Caco-2 (cell line): ENCODE measurements at regions of chr1 and their contacts with region 1.

Region 1: GRCh38 chr1:245156081-245156735 is 1.4 kb downstream of the KIF26B start:
- DNase-seq: peak; percentile 89 to 94
- H3K4me3 ChIP-seq: peak overlapping the region; percentile 63
- H3K4me3 Mint-ChIP-seq: peak overlapping the region; percentile 97
- H3K27ac Mint-ChIP-seq: no peak overlapping the region
- H3K4me1 ChIP-seq: peaks cover 8% of the 10 kb centered on the region
- H3K4me1 Mint-ChIP-seq: no peaks in the 10 kb centered on the region
- H3K27me3 ChIP-seq: no peaks in the 10 kb centered on the region; the same call in none of the 2 replicates
- H3K27me3 Mint-ChIP-seq: peaks cover 7% of the 10 kb centered on the region
- CTCF ChIP-seq: peak; percentile 82 to 84

Region 2: GRCh38 chr1:245108909-245109308 is 47.3 kb before region 1 on chr1:
- CTCF ChIA-PET with region 1: no interaction called
- POLR2A ChIA-PET with region 1: interaction called, 11 read pairs
- intact Hi-C with region 1: no loop called
- DNase-seq: no peak
- H3K4me3 ChIP-seq: no peak overlapping the region
- H3K4me3 Mint-ChIP-seq: no peak overlapping the region
- H3K27ac Mint-ChIP-seq: no peak overlapping the region
- H3K4me1 ChIP-seq: peaks cover 3% of the 10 kb centered on the region; the same call in 1 of the 2 replicates
- H3K4me1 Mint-ChIP-seq: peaks cover 20% of the 10 kb centered on the region
- H3K27me3 ChIP-seq: no peaks in the 10 kb centered on the region
- H3K27me3 Mint-ChIP-seq: no peaks in the 10 kb centered on the region
- CTCF ChIP-seq: no peak

Region 3: DNA sequence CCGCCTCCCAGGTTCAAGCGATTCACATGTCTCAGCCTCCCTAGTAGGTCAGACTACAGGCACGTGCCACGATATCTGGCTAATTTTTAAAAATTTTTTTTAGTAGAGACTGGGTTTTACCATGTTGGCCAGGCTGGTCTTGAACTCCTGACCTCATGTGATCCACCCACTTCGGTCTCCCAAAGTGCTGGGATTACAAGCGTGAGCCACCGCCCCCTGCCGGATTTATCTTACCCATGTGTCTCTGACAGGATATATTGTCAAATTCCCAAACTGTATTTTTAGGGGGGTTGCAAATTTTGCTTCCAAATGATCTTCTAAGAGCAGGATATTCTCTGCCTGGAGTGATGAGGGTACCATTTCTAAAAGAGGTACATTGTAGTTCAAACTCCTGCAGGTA is 72.8 kb after region 1 on chr1:
- CTCF ChIA-PET with region 1: no interaction called
- POLR2A ChIA-PET with region 1: no interaction called
- intact Hi-C with region 1: no loop called
- DNase-seq: no peak
- H3K4me3 ChIP-seq: no peak overlapping the region
- H3K4me3 Mint-ChIP-seq: no peak overlapping the region
- H3K27ac Mint-ChIP-seq: no peak overlapping the region
- H3K4me1 ChIP-seq: no peaks in the 10 kb centered on the region
- H3K4me1 Mint-ChIP-seq: no peaks in the 10 kb centered on the region
- H3K27me3 ChIP-seq: no peaks in the 10 kb centered on the region
- H3K27me3 Mint-ChIP-seq: no peaks in the 10 kb centered on the region
- CTCF ChIP-seq: no peak

Region 4: GRCh38 chr1:245241241-245242130 is 85.3 kb after region 1 on chr1:
- CTCF ChIA-PET with region 1: no interaction called
- POLR2A ChIA-PET with region 1: no interaction called
- intact Hi-C with region 1: no loop called
- DNase-seq: no peak
- H3K4me3 ChIP-seq: no peak overlapping the region
- H3K4me3 Mint-ChIP-seq: no peak overlapping the region
- H3K27ac Mint-ChIP-seq: no peak overlapping the region
- H3K4me1 ChIP-seq: peaks cover 11% of the 10 kb centered on the region
- H3K4me1 Mint-ChIP-seq: peaks cover 5% of the 10 kb centered on the region
- H3K27me3 ChIP-seq: no peaks in the 10 kb centered on the region
- H3K27me3 Mint-ChIP-seq: no peaks in the 10 kb centered on the region
- CTCF ChIP-seq: no peak

Region 5: DNA sequence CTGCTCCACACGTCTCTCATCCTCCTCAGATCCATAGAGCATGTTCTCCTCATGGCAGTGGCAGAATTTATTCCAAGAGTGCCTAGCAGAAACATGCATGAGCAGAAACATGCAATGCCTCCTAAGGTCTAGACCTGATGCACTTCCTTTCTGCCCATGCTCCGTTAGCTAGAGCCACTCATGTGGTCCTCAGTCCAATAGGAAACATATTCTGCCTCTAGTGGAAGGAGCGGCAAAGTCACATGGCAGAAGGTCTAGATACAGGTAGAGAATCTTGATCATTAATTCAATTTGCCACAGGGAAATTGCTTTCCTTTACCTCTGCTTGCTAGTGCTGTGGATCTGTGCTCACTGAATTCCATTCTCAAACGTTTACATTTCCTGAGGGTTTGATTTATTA is 129.0 kb after region 1 on chr1:
- CTCF ChIA-PET with region 1: no interaction called
- POLR2A ChIA-PET with region 1: no interaction called
- intact Hi-C with region 1: loop called (anchors 2 kb)
- DNase-seq: no peak
- H3K4me3 ChIP-seq: no peak overlapping the region
- H3K4me3 Mint-ChIP-seq: no peak overlapping the region
- H3K27ac Mint-ChIP-seq: no peak overlapping the region
- H3K4me1 ChIP-seq: no peaks in the 10 kb centered on the region; the same call in 1 of the 2 replicates
- H3K4me1 Mint-ChIP-seq: no peaks in the 10 kb centered on the region
- H3K27me3 ChIP-seq: no peaks in the 10 kb centered on the region
- H3K27me3 Mint-ChIP-seq: no peaks in the 10 kb centered on the region
- CTCF ChIP-seq: peak in 1 of 2 experiments; percentile 10

Region 6: GRCh38 chr1:245396615-245397014 is 240.4 kb after region 1 on chr1:
- CTCF ChIA-PET with region 1: no interaction called
- POLR2A ChIA-PET with region 1: no interaction called
- intact Hi-C with region 1: loop called (anchors 5 kb)
- DNase-seq: no peak
- H3K4me3 ChIP-seq: no peak overlapping the region
- H3K4me3 Mint-ChIP-seq: no peak overlapping the region
- H3K27ac Mint-ChIP-seq: no peak overlapping the region
- H3K4me1 ChIP-seq: peaks cover 56% of the 10 kb centered on the region
- H3K4me1 Mint-ChIP-seq: peaks cover 33% of the 10 kb centered on the region
- H3K27me3 ChIP-seq: no peaks in the 10 kb centered on the region
- H3K27me3 Mint-ChIP-seq: no peaks in the 10 kb centered on the region
- CTCF ChIP-seq: no peak

Region 7: GRCh38 chr1:245652660-245653427 is 496.6 kb after region 1 on chr1:
- CTCF ChIA-PET with region 1: interaction called, 5 read pairs
- POLR2A ChIA-PET with region 1: interaction called, 3 read pairs
- intact Hi-C with region 1: loop called (anchors 10 kb)
- DNase-seq: no peak
- H3K4me3 ChIP-seq: no peak overlapping the region
- H3K4me3 Mint-ChIP-seq: no peak overlapping the region
- H3K27ac Mint-ChIP-seq: peak overlapping the region; percentile 81
- H3K4me1 ChIP-seq: peaks cover 31% of the 10 kb centered on the region
- H3K4me1 Mint-ChIP-seq: peaks cover 36% of the 10 kb centered on the region
- H3K27me3 ChIP-seq: no peaks in the 10 kb centered on the region
- H3K27me3 Mint-ChIP-seq: no peaks in the 10 kb centered on the region
- CTCF ChIP-seq: no peak

Region 8: GRCh38 chr1:245858722-245859492 is 702.7 kb after region 1 on chr1:
- CTCF ChIA-PET with region 1: interaction called, 4 read pairs
- POLR2A ChIA-PET with region 1: no interaction called
- intact Hi-C with region 1: loop called (anchors 10 kb)
- DNase-seq: peak in 1 of 2 experiments; percentile 10
- H3K4me3 ChIP-seq: no peak overlapping the region
- H3K4me3 Mint-ChIP-seq: no peak overlapping the region
- H3K27ac Mint-ChIP-seq: no peak overlapping the region
- H3K4me1 ChIP-seq: peaks cover 4% of the 10 kb centered on the region; the same call in 1 of the 2 replicates
- H3K4me1 Mint-ChIP-seq: peaks cover 18% of the 10 kb centered on the region
- H3K27me3 ChIP-seq: no peaks in the 10 kb centered on the region
- H3K27me3 Mint-ChIP-seq: no peaks in the 10 kb centered on the region
- CTCF ChIP-seq: peak in 1 of 2 experiments; percentile 26

Region 9: DNA sequence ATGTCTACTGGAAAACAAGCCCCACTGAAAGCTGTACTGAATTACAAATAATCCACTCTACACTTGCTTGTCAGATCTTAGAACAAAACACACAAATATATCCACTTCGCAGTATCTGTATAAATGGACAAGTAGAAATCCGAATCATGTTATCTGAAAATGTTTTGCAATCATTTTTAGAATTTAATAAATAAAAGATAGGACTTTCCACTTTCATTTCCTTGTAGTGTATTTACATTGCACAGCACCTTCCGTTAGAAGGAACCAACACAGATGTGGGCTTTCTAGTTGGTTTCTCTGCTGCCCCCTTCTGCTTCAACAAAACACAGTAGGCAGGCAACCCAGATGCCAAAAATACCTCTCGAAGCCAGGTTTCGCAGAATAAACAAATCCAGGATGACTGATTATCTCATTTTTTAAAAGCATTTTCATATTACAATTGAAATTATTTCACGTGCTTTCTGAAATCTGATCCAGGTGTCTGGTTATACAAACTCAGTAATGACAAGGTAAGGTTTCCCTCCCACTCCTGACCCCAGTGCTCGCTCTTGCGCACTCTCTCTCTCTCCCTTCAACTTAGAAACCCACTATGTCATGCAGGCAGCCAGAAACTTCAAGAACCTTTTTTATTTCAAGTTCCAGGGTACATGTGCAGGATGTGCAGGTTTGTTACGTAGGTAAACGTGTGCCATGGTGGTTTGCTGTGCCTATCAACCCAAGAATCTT is 961.0 kb after region 1 on chr1:
- CTCF ChIA-PET with region 1: no interaction called
- POLR2A ChIA-PET with region 1: no interaction called
- intact Hi-C with region 1: loop called (anchors 2 kb)
- DNase-seq: peak; percentile 36 to 49
- H3K4me3 ChIP-seq: no peak overlapping the region
- H3K4me3 Mint-ChIP-seq: no peak overlapping the region
- H3K27ac Mint-ChIP-seq: no peak overlapping the region
- H3K4me1 ChIP-seq: peaks cover 15% of the 10 kb centered on the region
- H3K4me1 Mint-ChIP-seq: peaks cover 24% of the 10 kb centered on the region
- H3K27me3 ChIP-seq: no peaks in the 10 kb centered on the region
- H3K27me3 Mint-ChIP-seq: no peaks in the 10 kb centered on the region
- CTCF ChIP-seq: peak; percentile 32 to 62